Heart left ventricle (tissue), 16 donors: ENCODE measurements at regions of chr20 and their contacts with region 1.

Region 1: DNA sequence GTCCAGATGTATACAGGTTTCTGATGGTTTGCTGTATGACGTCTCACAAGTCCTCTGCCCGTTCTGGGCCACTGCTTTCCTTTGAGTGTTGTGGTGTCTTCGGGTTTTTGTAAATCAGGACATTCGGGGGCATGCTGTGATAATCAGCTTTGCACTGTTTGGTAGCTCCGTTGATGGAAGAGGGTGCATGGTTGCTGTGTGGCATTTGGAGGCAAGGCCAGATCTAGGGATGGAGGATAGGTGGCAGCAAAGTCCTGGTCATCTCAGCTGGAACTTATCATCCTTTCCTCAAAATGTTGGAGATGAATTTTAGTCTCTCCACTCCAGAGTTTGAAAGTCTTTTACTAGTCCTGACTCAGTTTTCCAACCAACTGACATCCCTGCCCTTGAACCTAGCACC is 91.0 kb downstream of the SCP2D1 start:
- DNase-seq: peak in 1 of 5 donors; percentile 27
- ATAC-seq: peak in 2 of 4 donors; percentile 64 to 66
- H3K4me3 ChIP-seq: no peak overlapping the region
- H3K27ac ChIP-seq: no peak overlapping the region
- H3K4me1 ChIP-seq: no peaks in the 10 kb centered on the region
- H3K27me3 ChIP-seq: no peaks in the 10 kb centered on the region
- CTCF ChIP-seq: peak in 9 of 12 donors; percentile 6 to 60 (median 46)
- POLR2A ChIP-seq: no peak

Region 2: GRCh38 chr20:18632196-18633009 is 272.2 kb before region 1 on chr20:
- intact Hi-C with region 1: loop called in 2 of 10 experiments (anchors 10 kb)
- DNase-seq: peak; percentile 56 to 70 (median 61)
- ATAC-seq: peak; percentile 88 to 94 (median 89)
- H3K4me3 ChIP-seq: no peak overlapping the region
- H3K27ac ChIP-seq: no peak overlapping the region
- H3K4me1 ChIP-seq: peaks cover 0 to 5% (median 0%) of the 10 kb centered on the region in 12 donors
- H3K27me3 ChIP-seq: no peaks in the 10 kb centered on the region
- CTCF ChIP-seq: peak; percentile 77 to 96 (median 86)
- POLR2A ChIP-seq: no peak

Region 3: DNA sequence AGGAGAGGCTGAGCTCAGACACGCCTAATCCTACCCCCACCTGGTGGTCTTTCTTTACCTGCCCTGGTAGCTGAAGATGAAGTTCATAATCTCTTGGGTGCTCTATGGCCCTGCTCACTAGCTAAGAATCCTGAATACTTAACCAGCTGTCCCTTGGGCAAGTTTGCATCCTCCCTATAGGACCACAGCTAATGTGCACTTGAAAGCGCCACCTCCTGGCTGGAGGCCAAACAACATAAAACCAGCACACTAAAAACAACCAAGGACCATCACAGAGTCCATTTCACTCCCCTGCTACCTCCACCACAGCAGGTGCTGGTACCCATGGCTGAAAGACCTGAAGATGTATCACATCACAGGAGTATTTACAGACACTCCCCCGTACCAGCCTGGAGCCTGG is 152.3 kb after region 1 on chr20:
- intact Hi-C with region 1: no loop called
- DNase-seq: no peak
- ATAC-seq: no peak
- H3K4me3 ChIP-seq: no peak overlapping the region
- H3K27ac ChIP-seq: no peak overlapping the region
- H3K4me1 ChIP-seq: no peaks in the 10 kb centered on the region
- H3K27me3 ChIP-seq: peaks cover 0 to 2% (median 0%) of the 10 kb centered on the region in 9 donors
- CTCF ChIP-seq: no peak
- POLR2A ChIP-seq: no peak

Region 4: GRCh38 chr20:19185090-19185489 is 280.5 kb after region 1 on chr20:
- intact Hi-C with region 1: loop called in 1 of 10 experiments (anchors 10 kb)
- DNase-seq: no peak
- ATAC-seq: no peak
- H3K4me3 ChIP-seq: no peak overlapping the region
- H3K27ac ChIP-seq: no peak overlapping the region
- H3K4me1 ChIP-seq: no peaks in the 10 kb centered on the region
- H3K27me3 ChIP-seq: no peaks in the 10 kb centered on the region
- CTCF ChIP-seq: peak in 1 of 12 donors; percentile 4
- POLR2A ChIP-seq: no peak

Region 5: GRCh38 chr20:19583532-19584175 is 679.0 kb after region 1 on chr20:
- intact Hi-C with region 1: loop called in 4 of 10 experiments (anchors 5 to 10 kb)
- DNase-seq: peak; percentile 44 to 79 (median 65)
- ATAC-seq: peak in 3 of 4 donors; percentile 81 to 86 (median 85)
- H3K4me3 ChIP-seq: no peak overlapping the region
- H3K27ac ChIP-seq: no peak overlapping the region
- H3K4me1 ChIP-seq: no peaks in the 10 kb centered on the region
- H3K27me3 ChIP-seq: peaks cover 0 to 6% (median 0%) of the 10 kb centered on the region in 9 donors
- CTCF ChIP-seq: peak; percentile 70 to 85 (median 79)
- POLR2A ChIP-seq: no peak

Region 6: DNA sequence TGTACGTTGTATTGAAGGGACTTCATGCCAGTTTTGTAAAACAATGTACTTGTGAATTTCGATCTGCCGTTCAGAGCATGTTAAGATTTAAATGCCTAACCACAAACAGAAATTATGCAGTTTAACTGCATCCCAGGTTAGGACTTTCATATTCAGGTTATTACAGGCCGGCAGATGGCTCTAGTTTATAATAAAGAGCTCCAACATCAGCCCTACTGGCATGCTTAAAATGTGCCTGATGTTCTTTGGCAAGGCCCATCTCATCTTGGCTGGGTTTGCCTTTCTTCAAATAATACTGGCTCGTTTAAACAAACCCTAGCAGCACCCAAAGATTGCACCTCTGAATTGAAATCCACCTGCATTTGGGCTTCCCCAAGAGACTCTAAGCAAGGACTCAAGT is 684.1 kb after region 1 on chr20:
- intact Hi-C with region 1: loop called in 4 of 10 experiments (anchors 5 to 10 kb)
- DNase-seq: no peak
- ATAC-seq: peak in 3 of 4 donors; percentile 23 to 50 (median 39)
- H3K4me3 ChIP-seq: no peak overlapping the region
- H3K27ac ChIP-seq: no peak overlapping the region
- H3K4me1 ChIP-seq: peaks cover 0 to 2% (median 0%) of the 10 kb centered on the region in 12 donors
- H3K27me3 ChIP-seq: peaks cover 0 to 6% (median 0%) of the 10 kb centered on the region in 9 donors
- CTCF ChIP-seq: peak in 3 of 12 donors; percentile 10 to 23 (median 15)
- POLR2A ChIP-seq: no peak